Activated T-helper 1 cell treated with anti-CD3 and anti-CD28 coated beads, Interleukin-12 subunit alpha, Interleukin-12 subunit beta, Interleukin-2, Interleukin-4 antibody, amounts not matched to agents 30 ng/mL and 10 ng/mL and 1 ng/mL, durations not matched to agents 14 hours and 24 hours and 36 hours (primary cell): ENCODE measurements at regions of chr1 and their contacts with region 1.

Region 1: GRCh38 chr1:209747580-209748262 is 8.1 kb upstream of the TRAF3IP3 start:
- DNase-seq: peak; percentile 78
- H3K4me3 Mint-ChIP-seq: peak overlapping the region; percentile 69
- H3K27ac Mint-ChIP-seq: peak overlapping the region; percentile 90
- H3K4me1 Mint-ChIP-seq: peaks cover 75% of the 10 kb centered on the region
- H3K27me3 Mint-ChIP-seq: no peaks in the 10 kb centered on the region

Region 2: GRCh38 chr1:209335178-209335577 is 412.5 kb before region 1 on chr1:
- intact Hi-C with region 1: loop called (anchors 10 kb)
- DNase-seq: no peak
- H3K4me3 Mint-ChIP-seq: no peak overlapping the region
- H3K27ac Mint-ChIP-seq: no peak overlapping the region
- H3K4me1 Mint-ChIP-seq: no peaks in the 10 kb centered on the region
- H3K27me3 Mint-ChIP-seq: peaks cover 8% of the 10 kb centered on the region

Region 3: DNA sequence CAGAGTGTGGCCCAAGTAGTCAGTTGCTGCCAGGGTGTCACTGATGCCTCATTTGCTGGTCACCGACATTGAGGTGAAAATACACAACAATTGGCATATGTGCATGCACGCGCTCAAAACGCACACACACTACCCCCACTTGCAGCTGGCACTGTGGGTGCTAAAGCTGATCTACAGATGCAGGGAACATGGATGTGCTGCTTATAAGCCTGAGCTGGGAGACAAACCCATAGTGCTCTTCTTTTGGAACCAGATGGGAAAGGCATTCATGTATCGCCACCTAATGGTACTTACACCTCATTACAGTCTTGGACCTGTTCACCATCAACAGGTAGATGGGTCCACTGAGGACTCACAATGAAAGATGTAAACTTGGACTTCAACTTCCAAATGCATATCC is 234.5 kb before region 1 on chr1:
- intact Hi-C with region 1: no loop called
- DNase-seq: no peak
- H3K4me3 Mint-ChIP-seq: no peak overlapping the region
- H3K27ac Mint-ChIP-seq: no peak overlapping the region
- H3K4me1 Mint-ChIP-seq: no peaks in the 10 kb centered on the region
- H3K27me3 Mint-ChIP-seq: peaks cover 6% of the 10 kb centered on the region

Region 4: DNA sequence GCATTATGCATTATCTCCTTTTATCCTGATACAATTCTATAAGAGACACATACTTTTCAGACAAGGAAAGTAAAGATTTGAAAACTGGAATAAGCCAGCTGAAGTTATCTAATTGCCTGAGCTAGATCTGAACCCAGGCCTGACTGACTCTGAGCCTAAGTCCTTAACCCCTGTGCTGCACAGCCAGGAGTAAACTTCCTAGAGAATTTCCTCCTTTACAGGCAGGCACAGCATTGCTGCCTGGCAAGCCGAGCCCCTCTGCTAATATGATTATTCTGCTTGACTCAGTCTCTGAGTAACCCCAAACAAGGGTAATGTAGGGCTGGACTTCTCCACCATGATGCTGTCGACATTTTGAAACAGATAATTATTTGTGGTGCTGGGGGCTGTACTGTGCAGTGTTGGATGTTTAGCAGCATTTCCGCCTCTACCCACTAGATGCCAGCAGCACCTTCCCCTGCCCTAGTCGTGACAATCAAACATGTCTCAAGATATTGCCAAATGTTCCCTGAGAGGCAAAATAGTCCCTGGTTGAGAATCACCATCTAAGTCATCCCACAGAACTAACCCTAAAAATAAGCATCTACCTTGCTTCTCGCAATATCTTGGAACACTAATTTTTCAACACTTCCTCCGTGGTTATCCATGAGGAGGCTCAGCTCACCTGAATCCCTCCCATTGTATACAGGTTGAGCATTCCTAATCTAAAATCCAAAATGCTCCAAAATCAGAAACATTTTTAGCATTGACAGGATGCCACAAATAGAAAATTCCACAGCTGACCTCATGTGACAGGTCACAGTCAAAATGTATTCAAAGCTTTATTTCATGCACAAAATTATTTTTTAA is 145.7 kb before region 1 on chr1:
- intact Hi-C with region 1: loop called (anchors 1 kb)
- DNase-seq: peak; percentile 14
- H3K4me3 Mint-ChIP-seq: no peak overlapping the region
- H3K27ac Mint-ChIP-seq: no peak overlapping the region
- H3K4me1 Mint-ChIP-seq: peaks cover 19% of the 10 kb centered on the region
- H3K27me3 Mint-ChIP-seq: peaks cover 26% of the 10 kb centered on the region

Region 5: GRCh38 chr1:209651148-209651547 is 96.6 kb before region 1 on chr1:
- intact Hi-C with region 1: loop called (anchors 1 kb)
- DNase-seq: peak; percentile 70
- H3K4me3 Mint-ChIP-seq: peak overlapping the region; percentile 58
- H3K27ac Mint-ChIP-seq: peak overlapping the region; percentile 96
- H3K4me1 Mint-ChIP-seq: peaks cover 76% of the 10 kb centered on the region
- H3K27me3 Mint-ChIP-seq: no peaks in the 10 kb centered on the region

Region 6: DNA sequence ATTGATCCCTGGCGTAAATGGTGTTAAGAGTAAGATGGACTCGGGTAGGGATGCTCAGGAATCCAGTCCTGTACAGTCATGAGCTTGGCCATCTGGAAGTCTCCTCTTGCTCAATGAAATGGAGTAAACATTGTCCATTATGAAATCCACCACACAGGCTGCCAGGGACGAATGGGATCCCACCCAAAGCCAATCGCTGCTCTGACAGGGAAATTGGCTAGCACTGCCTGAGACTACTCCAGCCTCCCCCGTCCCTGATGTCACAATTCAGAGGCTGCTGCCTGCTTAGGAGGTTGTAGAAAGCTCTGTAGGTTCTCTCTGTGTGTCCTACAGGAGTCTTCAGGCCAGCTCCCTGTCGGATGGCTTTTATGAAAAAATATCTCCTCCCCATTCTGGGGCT is 43.1 kb before region 1 on chr1 and contains the start of gene HSD11B1:
- intact Hi-C with region 1: loop called (anchors 1 kb)
- DNase-seq: no peak
- H3K4me3 Mint-ChIP-seq: peak within 1 kb of the TSS; percentile 58
- H3K27ac Mint-ChIP-seq: peak within 1 kb of the TSS; percentile 80
- H3K4me1 Mint-ChIP-seq: peaks cover 72% of the 10 kb centered on the region
- H3K27me3 Mint-ChIP-seq: no peaks in the 10 kb centered on the region
- total RNA-seq, gene HSD11B1: 15.9 and 17.9 TPM in 2 replicates

Region 7: GRCh38 chr1:209736490-209737117 is 11.1 kb before region 1 on chr1:
- intact Hi-C with region 1: loop called (anchors 1 kb)
- DNase-seq: no peak
- H3K4me3 Mint-ChIP-seq: no peak overlapping the region
- H3K27ac Mint-ChIP-seq: peak overlapping the region; percentile 89
- H3K4me1 Mint-ChIP-seq: peaks cover 51% of the 10 kb centered on the region
- H3K27me3 Mint-ChIP-seq: no peaks in the 10 kb centered on the region

Region 8: GRCh38 chr1:209774592-209774991 is 26.9 kb after region 1 on chr1:
- intact Hi-C with region 1: no loop called
- DNase-seq: no peak
- H3K4me3 Mint-ChIP-seq: no peak overlapping the region
- H3K27ac Mint-ChIP-seq: peak overlapping the region; percentile 82
- H3K4me1 Mint-ChIP-seq: peaks cover 48% of the 10 kb centered on the region
- H3K27me3 Mint-ChIP-seq: no peaks in the 10 kb centered on the region

Region 9: DNA sequence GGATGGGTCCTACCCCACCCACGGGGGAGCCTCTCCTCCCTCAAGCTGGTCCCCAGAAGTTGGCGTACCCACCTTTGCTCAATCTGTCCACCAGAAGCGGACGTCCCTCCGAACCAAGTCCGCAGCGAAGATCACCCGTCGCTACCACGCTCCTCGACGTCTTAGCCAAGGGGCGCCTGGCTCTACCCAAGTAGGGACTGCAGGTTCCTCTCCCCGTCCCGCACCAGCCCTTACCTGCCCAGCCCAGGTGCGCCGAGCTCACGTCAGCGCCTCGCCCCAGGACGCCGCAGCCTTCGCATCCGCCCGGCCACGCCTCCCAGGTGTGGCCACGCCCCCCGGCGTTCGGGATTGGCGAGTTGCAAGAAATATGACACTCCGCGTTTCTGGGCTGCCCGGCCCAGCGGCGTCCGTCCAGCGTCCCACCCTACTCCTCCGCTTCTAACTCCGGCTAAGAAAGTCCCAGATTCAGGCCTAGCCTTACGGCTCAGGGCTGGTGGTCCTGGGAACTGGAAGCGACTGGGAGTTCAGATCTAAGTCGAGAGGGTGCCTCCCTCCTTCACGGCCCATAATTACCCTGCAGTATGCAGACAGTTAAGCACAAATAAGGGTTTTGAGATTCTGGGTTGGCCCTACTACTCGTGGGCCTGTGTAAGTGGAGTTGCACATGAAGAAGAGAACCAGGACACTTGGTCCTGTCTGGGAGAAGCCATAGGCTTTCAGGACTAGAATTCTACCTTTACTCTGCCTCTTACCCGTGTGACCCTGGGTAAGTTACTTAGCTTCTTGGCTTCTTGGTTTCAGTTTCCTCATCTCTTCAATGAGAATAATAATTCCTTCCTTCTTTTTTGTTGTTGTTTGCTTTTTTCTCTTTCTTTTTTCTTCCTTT is 58.4 kb after region 1 on chr1 and contains the start of gene IRF6:
- intact Hi-C with region 1: no loop called
- DNase-seq: no peak
- H3K4me3 Mint-ChIP-seq: peak within 1 kb of the TSS; percentile 27
- H3K27ac Mint-ChIP-seq: no peak within 1 kb of the TSS
- H3K4me1 Mint-ChIP-seq: peaks cover 18% of the 10 kb centered on the region
- H3K27me3 Mint-ChIP-seq: peaks cover 10% of the 10 kb centered on the region
- total RNA-seq, gene IRF6: 0.16 and 0.17 TPM in 2 replicates

Region 10: GRCh38 chr1:210328746-210329503 is 581.2 kb after region 1 on chr1 and contains the start of gene HHAT:
- intact Hi-C with region 1: loop called (anchors 1 kb)
- DNase-seq: peak; percentile 52
- H3K4me3 Mint-ChIP-seq: peak within 1 kb of the TSS; percentile 90
- H3K27ac Mint-ChIP-seq: peak within 1 kb of the TSS; percentile 95
- H3K4me1 Mint-ChIP-seq: peaks cover 42% of the 10 kb centered on the region
- H3K27me3 Mint-ChIP-seq: peaks cover 12% of the 10 kb centered on the region
- total RNA-seq, gene HHAT: 0.67 and 0.73 TPM in 2 replicates